ENCODE measurements at regions of chr17 and their contacts with region 1.

Region 1: GRCh38 chr17:50169121-50169764 is 3.4 kb downstream of the SGCA start:
- DNase-seq: peak; percentile 71 to 81 (median 72)
- H3K4me3 ChIP-seq: peak overlapping the region in 1 of 2 donors; percentile 35
- H3K4me3 Mint-ChIP-seq: peak overlapping the region; percentile 25 to 87 (median 65)
- H3K27ac ChIP-seq: no peak overlapping the region
- H3K27ac Mint-ChIP-seq: peak overlapping the region; percentile 37 to 89 (median 81)
- H3K4me1 ChIP-seq: peaks cover 10% of the 10 kb centered on the region
- H3K4me1 Mint-ChIP-seq: peaks cover 10 to 19% (median 11%) of the 10 kb centered on the region in 4 donors
- H3K27me3 ChIP-seq: no peaks in the 10 kb centered on the region
- H3K27me3 Mint-ChIP-seq: peaks cover 2 to 3% of the 10 kb centered on the region in 2 donors

Region 2: GRCh38 chr17:50114849-50115357 is 54.3 kb before region 1 on chr17:
- CTCF ChIA-PET with region 1: interaction called, 10 read pairs
- POLR2A ChIA-PET with region 1: no interaction called
- intact Hi-C with region 1: no loop called
- DNase-seq: peak in 4 of 5 donors; percentile 30 to 50 (median 42)
- H3K4me3 ChIP-seq: no peak overlapping the region
- H3K4me3 Mint-ChIP-seq: no peak overlapping the region
- H3K27ac ChIP-seq: no peak overlapping the region
- H3K27ac Mint-ChIP-seq: peak overlapping the region in 1 of 7 donors; percentile 45
- H3K4me1 ChIP-seq: peaks cover 13% of the 10 kb centered on the region
- H3K4me1 Mint-ChIP-seq: peaks cover 7 to 16% (median 12%) of the 10 kb centered on the region in 4 donors
- H3K27me3 ChIP-seq: peaks cover 7% of the 10 kb centered on the region
- H3K27me3 Mint-ChIP-seq: peaks cover 14 to 20% of the 10 kb centered on the region in 2 donors

Region 3: DNA sequence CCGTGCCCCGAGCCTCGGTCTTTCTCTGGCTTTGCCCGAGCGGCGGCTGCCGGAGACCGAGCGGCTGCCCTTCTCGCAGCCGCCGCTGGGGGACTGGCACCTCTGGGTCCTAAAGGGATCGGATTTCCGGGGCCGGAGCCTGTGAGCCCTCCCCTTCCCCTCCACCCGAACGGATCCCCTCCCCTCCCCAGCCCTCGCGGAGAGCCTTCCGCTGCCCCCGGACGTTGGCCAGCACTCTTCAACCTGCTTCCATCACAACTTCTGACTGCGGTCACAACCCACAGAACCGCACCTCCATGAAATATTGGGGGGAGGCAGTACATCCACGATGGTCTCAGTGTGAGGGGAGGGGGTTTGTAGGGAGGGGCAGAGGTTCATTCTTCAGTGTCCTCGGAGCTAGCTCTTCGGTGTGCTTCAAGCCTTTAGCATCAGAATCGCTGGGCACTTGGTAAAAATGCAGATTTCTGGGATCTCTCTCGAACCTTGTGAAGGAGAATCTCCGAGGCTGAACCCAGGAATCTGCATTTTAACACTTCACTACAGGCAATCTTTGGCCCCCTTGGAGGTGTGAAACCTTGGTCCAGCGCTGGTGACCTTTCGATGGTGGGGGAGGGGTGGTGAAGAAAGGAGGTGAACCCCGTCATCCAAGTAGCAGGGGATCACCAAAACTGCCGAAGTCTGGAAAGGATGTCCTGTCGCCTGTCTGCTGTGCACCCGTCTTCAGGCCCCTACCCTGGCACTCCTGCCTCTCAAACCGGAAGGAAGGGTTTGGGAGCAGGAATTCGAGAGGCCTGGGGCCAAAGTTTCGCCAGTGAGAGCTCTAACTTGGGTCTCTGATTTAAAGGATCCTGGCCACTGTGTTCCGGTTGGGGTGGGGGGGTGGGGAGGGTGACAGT is 18.0 kb before region 1 on chr17:
- CTCF ChIA-PET with region 1: interaction called, 13 read pairs
- POLR2A ChIA-PET with region 1: interaction called, 7 read pairs
- intact Hi-C with region 1: no loop called
- DNase-seq: peak; percentile 82 to 91 (median 84)
- H3K4me3 ChIP-seq: peak overlapping the region; percentile 76 to 93
- H3K4me3 Mint-ChIP-seq: peak overlapping the region; percentile 85 to 94 (median 89)
- H3K27ac ChIP-seq: peak overlapping the region; percentile 79
- H3K27ac Mint-ChIP-seq: peak overlapping the region; percentile 86 to 98 (median 91)
- H3K4me1 ChIP-seq: peaks cover 50% of the 10 kb centered on the region
- H3K4me1 Mint-ChIP-seq: peaks cover 20 to 54% (median 37%) of the 10 kb centered on the region in 4 donors
- H3K27me3 ChIP-seq: no peaks in the 10 kb centered on the region
- H3K27me3 Mint-ChIP-seq: no peaks in the 10 kb centered on the region

Region 4: DNA sequence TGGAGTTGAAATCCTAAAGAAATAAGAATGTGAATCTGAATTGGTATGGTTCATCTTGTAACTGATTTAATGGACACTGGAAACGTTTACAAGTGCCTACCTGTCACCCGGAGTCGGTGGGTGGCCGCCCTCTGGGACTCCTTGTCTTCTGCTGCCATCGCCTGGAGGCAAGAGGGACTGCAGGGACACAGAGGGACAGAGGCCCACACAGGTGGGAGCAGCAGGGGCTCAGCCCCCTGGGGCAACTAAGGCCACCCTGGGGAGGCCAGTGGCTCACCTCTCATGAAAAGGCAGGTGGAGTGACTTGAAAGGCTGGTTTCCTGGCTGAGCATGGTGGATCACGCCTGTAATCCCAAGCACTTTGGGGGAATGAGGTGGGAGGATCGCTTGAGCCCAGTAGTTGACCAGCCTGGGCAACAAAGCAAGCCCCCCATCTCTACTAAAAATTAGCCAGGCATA is 128.2 kb after region 1 on chr17:
- CTCF ChIA-PET with region 1: interaction called, 13 read pairs
- POLR2A ChIA-PET with region 1: no interaction called
- intact Hi-C with region 1: no loop called
- DNase-seq: peak; percentile 73 to 81 (median 75)
- H3K4me3 ChIP-seq: no peak overlapping the region
- H3K4me3 Mint-ChIP-seq: no peak overlapping the region
- H3K27ac ChIP-seq: no peak overlapping the region
- H3K27ac Mint-ChIP-seq: peak overlapping the region in 1 of 7 donors; percentile 47
- H3K4me1 ChIP-seq: no peaks in the 10 kb centered on the region
- H3K4me1 Mint-ChIP-seq: no peaks in the 10 kb centered on the region
- H3K27me3 ChIP-seq: no peaks in the 10 kb centered on the region
- H3K27me3 Mint-ChIP-seq: peaks cover 0 to 4% of the 10 kb centered on the region in 2 donors

Region 5: GRCh38 chr17:50452610-50453300 is 283.5 kb after region 1 on chr17:
- CTCF ChIA-PET with region 1: no interaction called
- POLR2A ChIA-PET with region 1: no interaction called
- intact Hi-C with region 1: no loop called
- DNase-seq: no peak
- H3K4me3 ChIP-seq: no peak overlapping the region
- H3K4me3 Mint-ChIP-seq: no peak overlapping the region
- H3K27ac ChIP-seq: no peak overlapping the region
- H3K27ac Mint-ChIP-seq: peak overlapping the region in 1 of 7 donors; percentile 25
- H3K4me1 ChIP-seq: no peaks in the 10 kb centered on the region
- H3K4me1 Mint-ChIP-seq: peaks cover 0 to 3% (median 0%) of the 10 kb centered on the region in 4 donors
- H3K27me3 ChIP-seq: no peaks in the 10 kb centered on the region
- H3K27me3 Mint-ChIP-seq: no peaks in the 10 kb centered on the region

Measured in CD4-positive, alpha-beta memory T cell (primary cell).